ENCODE measurements at regions of chr10 and their contacts with region 1.

Region 1: GRCh38 chr10:59625721-59626522 is 83.7 kb downstream of the SLC16A9 start:
- DNase-seq: peak; percentile 81 to 90 (median 88)
- H3K4me3 ChIP-seq: peak overlapping the region in 1 of 7 experiments; percentile 32
- H3K27ac ChIP-seq: no peak overlapping the region
- H3K4me1 ChIP-seq: peaks cover 0 to 9% (median 6%) of the 10 kb centered on the region in 4 experiments
- H3K27me3 ChIP-seq: no peaks in the 10 kb centered on the region

Region 2: GRCh38 chr10:59240582-59241183 is 385.2 kb before region 1 on chr10:
- CTCF ChIA-PET with region 1: interaction called, 19 read pairs
- POLR2A ChIA-PET with region 1: no interaction called
- DNase-seq: peak; percentile 47 to 75 (median 65)
- H3K4me3 ChIP-seq: no peak overlapping the region
- H3K27ac ChIP-seq: no peak overlapping the region
- H3K4me1 ChIP-seq: no peaks in the 10 kb centered on the region
- H3K27me3 ChIP-seq: no peaks in the 10 kb centered on the region

Region 3: DNA sequence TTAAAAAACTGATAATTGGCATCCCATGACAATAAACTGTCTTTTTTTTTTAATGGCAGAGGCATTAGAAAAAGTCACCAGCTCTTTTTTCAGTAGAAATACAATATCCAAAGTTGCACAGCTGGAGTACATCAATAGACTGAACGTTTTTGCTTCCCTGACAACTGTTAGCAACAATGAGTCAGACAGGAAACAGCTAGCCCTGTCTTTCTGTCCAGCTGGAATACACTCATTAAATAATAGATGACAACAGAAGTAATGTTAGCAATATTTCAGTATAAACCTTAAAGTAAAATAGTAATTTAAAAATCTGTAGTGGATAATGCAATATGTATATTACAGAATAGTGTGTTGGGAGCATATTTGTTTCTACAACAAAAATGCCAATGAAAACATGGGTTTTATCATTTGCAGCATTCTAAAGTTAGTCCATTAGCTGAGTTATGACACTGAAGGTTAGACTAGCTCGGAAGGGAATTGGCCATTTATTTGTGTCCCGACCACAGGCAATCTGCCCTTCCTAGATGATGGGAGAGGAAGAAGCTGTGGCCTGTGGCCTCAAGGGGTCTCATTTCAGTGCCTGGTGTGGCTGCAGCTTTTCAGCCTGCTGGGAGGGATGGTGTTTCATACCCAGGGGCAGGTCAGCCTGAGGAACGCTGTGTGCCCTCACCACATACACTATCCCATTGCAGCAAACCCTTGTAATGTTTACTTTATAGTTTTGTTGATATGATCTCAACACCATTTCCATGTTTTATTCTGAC is 89.6 kb before region 1 on chr10:
- CTCF ChIA-PET with region 1: no interaction called
- POLR2A ChIA-PET with region 1: no interaction called
- DNase-seq: peak; percentile 22 to 92 (median 82)
- H3K4me3 ChIP-seq: peak overlapping the region in 2 of 7 experiments; percentile 12 to 39
- H3K27ac ChIP-seq: peak overlapping the region; percentile 48 to 65
- H3K4me1 ChIP-seq: peaks cover 0 to 12% (median 6%) of the 10 kb centered on the region in 4 experiments
- H3K27me3 ChIP-seq: no peaks in the 10 kb centered on the region

Region 4: GRCh38 chr10:59577984-59578383 is 47.9 kb before region 1 on chr10:
- CTCF ChIA-PET with region 1: no interaction called
- POLR2A ChIA-PET with region 1: no interaction called
- DNase-seq: peak in 2 of 3 donors; percentile 15 to 26
- H3K4me3 ChIP-seq: no peak overlapping the region
- H3K27ac ChIP-seq: no peak overlapping the region
- H3K4me1 ChIP-seq: no peaks in the 10 kb centered on the region
- H3K27me3 ChIP-seq: no peaks in the 10 kb centered on the region

Region 5: GRCh38 chr10:59817773-59818172 is 191.9 kb after region 1 on chr10:
- CTCF ChIA-PET with region 1: interaction called, 183 read pairs
- POLR2A ChIA-PET with region 1: no interaction called
- DNase-seq: peak; percentile 91 to 97 (median 96)
- H3K4me3 ChIP-seq: peak overlapping the region in 2 of 7 experiments; percentile 14 to 20
- H3K27ac ChIP-seq: peak overlapping the region; percentile 25 to 69
- H3K4me1 ChIP-seq: peaks cover 6 to 53% (median 19%) of the 10 kb centered on the region in 4 experiments
- H3K27me3 ChIP-seq: no peaks in the 10 kb centered on the region

Region 6: GRCh38 chr10:60032723-60033122 is 406.8 kb after region 1 on chr10:
- CTCF ChIA-PET with region 1: interaction called, 18 read pairs
- POLR2A ChIA-PET with region 1: no interaction called
- DNase-seq: peak; percentile 68 to 84 (median 84)
- H3K4me3 ChIP-seq: no peak overlapping the region
- H3K27ac ChIP-seq: no peak overlapping the region
- H3K4me1 ChIP-seq: peaks cover 0 to 26% (median 10%) of the 10 kb centered on the region in 4 experiments
- H3K27me3 ChIP-seq: no peaks in the 10 kb centered on the region

Measured in common myeloid progenitor, CD34-positive (primary cell).